ENCODE measurements at regions of chr19 and their contacts with region 1.

Region 1: DNA sequence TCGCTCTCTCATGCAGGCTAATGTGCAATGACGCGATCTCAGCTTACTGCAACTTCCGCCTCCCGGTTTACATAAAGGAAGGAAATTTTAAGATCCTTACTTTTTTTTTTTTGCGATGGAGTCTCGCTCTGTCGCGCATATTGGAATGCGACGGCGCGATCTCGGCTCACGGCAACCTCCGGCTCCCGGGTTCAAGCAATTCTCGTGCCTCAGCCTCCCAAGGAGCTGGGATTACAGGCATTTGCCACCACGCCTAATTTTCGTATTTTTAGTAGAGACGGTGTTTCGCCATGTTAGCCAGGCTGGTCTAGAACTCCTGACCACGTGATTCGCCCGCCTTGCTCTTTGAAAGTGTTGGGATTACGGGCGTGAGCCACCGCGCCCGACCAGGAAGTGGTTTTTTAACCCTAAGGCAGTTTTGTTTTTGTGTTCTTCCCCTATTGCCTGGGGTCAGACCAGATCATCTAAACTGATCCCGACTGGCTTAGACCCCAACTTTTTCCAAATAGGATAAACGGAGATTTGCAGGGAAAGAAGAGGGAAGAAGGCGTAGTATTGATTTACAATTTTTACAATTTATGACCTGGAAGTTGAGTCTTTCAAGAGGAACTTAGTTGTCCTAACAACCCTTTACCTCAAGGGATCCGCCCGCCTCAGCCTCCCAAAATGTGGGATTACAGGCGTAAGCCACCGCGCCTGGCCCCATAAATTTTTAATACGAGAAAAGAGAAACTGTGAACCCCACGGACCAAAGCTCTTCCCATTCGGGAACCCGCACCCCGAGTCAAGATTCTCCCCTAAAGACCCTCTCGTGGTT is 142.0 kb downstream of the ZNF737 start:
- DNase-seq: peak; percentile 28 to 58
- ATAC-seq: no peak
- H3K4me3 ChIP-seq: peak overlapping the region; percentile 68
- H3K4me3 Mint-ChIP-seq: peak overlapping the region; percentile 98
- H3K27ac ChIP-seq: peak overlapping the region; percentile 52
- H3K27ac Mint-ChIP-seq: peak overlapping the region; percentile 86 to 93
- H3K4me1 ChIP-seq: peaks cover 14% of the 10 kb centered on the region
- H3K4me1 Mint-ChIP-seq: peaks cover 12 to 18% of the 10 kb centered on the region in 2 donors
- H3K27me3 ChIP-seq: no peaks in the 10 kb centered on the region
- H3K27me3 Mint-ChIP-seq: no peaks in the 10 kb centered on the region
- CTCF ChIP-seq: no peak

Region 2: DNA sequence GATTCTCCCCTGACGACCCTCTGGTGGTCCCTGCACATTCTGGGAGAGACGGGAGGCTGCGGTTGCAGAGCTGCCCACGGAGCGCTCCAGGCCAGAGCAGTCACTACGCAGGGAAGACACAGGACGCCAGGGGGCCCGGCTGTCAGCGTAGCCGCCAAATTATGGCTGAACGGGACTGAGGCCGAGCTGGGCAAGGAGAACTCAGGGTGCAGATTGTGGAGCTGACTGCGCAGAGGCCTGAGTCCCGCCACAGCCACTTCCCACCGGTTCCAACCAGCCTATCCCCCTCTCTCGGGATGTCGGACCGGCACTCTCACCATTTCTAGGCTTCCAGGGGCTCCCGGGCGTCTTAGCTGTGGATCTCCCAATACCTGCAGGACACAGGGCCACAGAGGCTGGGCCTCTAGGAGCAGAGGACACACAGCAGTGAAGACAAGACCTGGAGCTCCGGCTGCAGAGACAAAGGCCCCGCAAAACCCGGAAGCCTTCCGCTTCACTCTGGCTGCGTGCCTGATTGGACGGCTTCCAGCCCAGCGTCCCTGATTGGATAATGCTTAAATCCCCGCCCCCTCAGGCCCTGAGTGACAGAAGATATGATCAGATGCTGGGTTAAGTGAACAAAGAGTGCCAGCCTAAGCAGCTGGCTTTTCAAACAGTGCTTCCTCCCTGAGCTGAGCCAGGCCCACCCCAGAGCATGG is 141.9 kb after region 1 on chr19 and contains the start of gene ZNF737:
- intact Hi-C with region 1: loop called (anchors 1 kb)
- DNase-seq: peak; percentile 90 to 97
- ATAC-seq: peak; percentile 90 to 95 (median 92)
- H3K4me3 ChIP-seq: peak within 1 kb of the TSS; percentile 78
- H3K4me3 Mint-ChIP-seq: peak within 1 kb of the TSS; percentile 100
- H3K27ac ChIP-seq: peak within 1 kb of the TSS; percentile 84
- H3K27ac Mint-ChIP-seq: peak within 1 kb of the TSS; percentile 99 to 100
- H3K4me1 ChIP-seq: peaks cover 11% of the 10 kb centered on the region
- H3K4me1 Mint-ChIP-seq: peaks cover 31 to 36% of the 10 kb centered on the region in 2 donors
- H3K27me3 ChIP-seq: no peaks in the 10 kb centered on the region
- H3K27me3 Mint-ChIP-seq: no peaks in the 10 kb centered on the region
- CTCF ChIP-seq: no peak
- total RNA-seq, gene ZNF737: 10.1 to 16.5 (median 13.7) TPM

Region 3: GRCh38 chr19:20776083-20777076 is 352.8 kb after region 1 on chr19 and contains the start of gene ZNF66:
- intact Hi-C with region 1: loop called (anchors 2 kb)
- DNase-seq: peak; percentile 96 to 97
- ATAC-seq: peak; percentile 97 to 99 (median 99)
- H3K4me3 ChIP-seq: peak within 1 kb of the TSS; percentile 80
- H3K4me3 Mint-ChIP-seq: peak within 1 kb of the TSS; percentile 99
- H3K27ac ChIP-seq: peak within 1 kb of the TSS; percentile 78
- H3K27ac Mint-ChIP-seq: peak within 1 kb of the TSS; percentile 97 to 98
- H3K4me1 ChIP-seq: peaks cover 3% of the 10 kb centered on the region
- H3K4me1 Mint-ChIP-seq: peaks cover 13 to 28% of the 10 kb centered on the region in 2 donors
- H3K27me3 ChIP-seq: no peaks in the 10 kb centered on the region
- H3K27me3 Mint-ChIP-seq: no peaks in the 10 kb centered on the region
- CTCF ChIP-seq: no peak
- total RNA-seq, gene ZNF66: 7.7 to 11.8 (median 10.6) TPM

Measured in natural killer cell (primary cell).